IMR-90 (cell line): ENCODE measurements at regions of chr2 and their contacts with region 1.

Region 1: GRCh38 chr2:241877989-241878970 is 8.8 kb downstream of the RTP5 start:
- DNase-seq: peak; percentile 54
- ATAC-seq: peak; percentile 66
- H3K4me3 ChIP-seq: no peak overlapping the region
- H3K27ac ChIP-seq: no peak overlapping the region
- H3K4me1 ChIP-seq: no peaks in the 10 kb centered on the region
- H3K27me3 ChIP-seq: no peaks in the 10 kb centered on the region
- CTCF ChIP-seq: peak; percentile 73
- POLR2A ChIP-seq: no peak
- RAD21 ChIP-seq: peak; percentile 77

Region 2: GRCh38 chr2:240960309-240960970 is 917.8 kb before region 1 on chr2:
- CTCF ChIA-PET with region 1: no interaction called
- POLR2A ChIA-PET with region 1: no interaction called
- dilution Hi-C with region 1: no loop called
- in situ Hi-C with region 1: no loop called
- intact Hi-C with region 1: no loop called
- DNase-seq: peak; percentile 6
- ATAC-seq: peak; percentile 52
- H3K4me3 ChIP-seq: no peak overlapping the region
- H3K27ac ChIP-seq: peak overlapping the region; percentile 48; the same call in 1 of the 2 replicates
- H3K4me1 ChIP-seq: peaks cover 32% of the 10 kb centered on the region; the same call in 1 of the 2 replicates
- H3K27me3 ChIP-seq: peaks cover 12% of the 10 kb centered on the region; the same call in 1 of the 2 replicates
- CTCF ChIP-seq: no peak
- POLR2A ChIP-seq: no peak
- RAD21 ChIP-seq: no peak

Region 3: GRCh38 chr2:241702132-241703031 is 175.9 kb before region 1 on chr2:
- CTCF ChIA-PET with region 1: no interaction called
- POLR2A ChIA-PET with region 1: no interaction called
- dilution Hi-C with region 1: no loop called
- in situ Hi-C with region 1: no loop called
- intact Hi-C with region 1: loop called (anchors 10 kb)
- DNase-seq: peak; percentile 75
- ATAC-seq: peak; percentile 89
- H3K4me3 ChIP-seq: peak overlapping the region; percentile 80
- H3K27ac ChIP-seq: peak overlapping the region; percentile 46; the same call in 1 of the 2 replicates
- H3K4me1 ChIP-seq: peaks cover 4% of the 10 kb centered on the region; the same call in 1 of the 2 replicates
- H3K27me3 ChIP-seq: no peaks in the 10 kb centered on the region
- CTCF ChIP-seq: no peak; the same call in 1 of the 2 replicates
- POLR2A ChIP-seq: no peak
- RAD21 ChIP-seq: no peak